ENCODE measurements at regions of chr2 and their contacts with region 1.

Region 1: GRCh38 chr2:36663851-36664695 is 32.4 kb upstream of the VIT start:
- DNase-seq: peak; percentile 25 to 71
- H3K4me3 ChIP-seq: no peak overlapping the region
- H3K27ac ChIP-seq: no peak overlapping the region
- H3K4me1 ChIP-seq: peaks cover 18% of the 10 kb centered on the region
- H3K27me3 ChIP-seq: no peaks in the 10 kb centered on the region
- CTCF ChIP-seq: peak; percentile 94

Region 2: GRCh38 chr2:35731674-35732073 is 932.4 kb before region 1 on chr2:
- CTCF ChIA-PET with region 1: no interaction called
- POLR2A ChIA-PET with region 1: interaction called, 14 read pairs
- intact Hi-C with region 1: no loop called
- DNase-seq: no peak
- H3K4me3 ChIP-seq: no peak overlapping the region
- H3K27ac ChIP-seq: no peak overlapping the region
- H3K4me1 ChIP-seq: no peaks in the 10 kb centered on the region
- H3K27me3 ChIP-seq: no peaks in the 10 kb centered on the region
- CTCF ChIP-seq: no peak